Lower leg skin (tissue), 4 donors: ENCODE measurements at regions of chr2 and their contacts with region 1.

Region 1: DNA sequence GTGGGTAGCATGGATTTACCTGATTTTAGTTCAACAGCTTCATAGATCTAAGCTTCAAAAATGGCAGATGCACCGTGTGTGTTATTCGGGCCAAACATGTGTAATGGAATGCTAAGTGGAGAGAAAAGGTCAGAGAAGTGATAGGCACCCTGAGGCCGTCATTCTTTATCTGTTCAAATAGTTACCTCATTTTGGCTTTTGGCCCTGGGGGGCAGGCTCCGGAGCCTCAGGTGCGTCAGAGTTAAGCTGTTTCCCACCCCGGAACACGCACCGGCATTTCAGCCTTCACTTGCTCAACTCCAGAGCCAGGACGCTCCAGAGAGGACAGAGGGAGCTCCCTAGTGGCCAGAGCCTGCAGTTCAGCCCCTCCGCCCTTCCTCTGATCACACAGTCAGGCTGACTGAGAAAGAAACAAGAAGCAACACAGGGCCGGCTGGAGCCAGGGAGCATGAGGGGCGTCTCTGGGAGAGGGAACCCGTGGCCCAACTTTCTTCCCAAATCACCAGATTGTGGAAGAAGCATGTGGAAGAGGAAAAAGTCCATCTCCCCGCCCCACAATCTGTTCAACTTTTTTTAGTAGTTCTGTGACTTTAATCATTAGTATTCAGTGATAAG is 135.2 kb upstream of the EPC2 start:
- DNase-seq: peak; percentile 82 to 95
- H3K4me3 ChIP-seq: no peak overlapping the region
- CTCF ChIP-seq: peak in 1 of 3 donors; percentile 47
- POLR2A ChIP-seq: no peak

Region 2: DNA sequence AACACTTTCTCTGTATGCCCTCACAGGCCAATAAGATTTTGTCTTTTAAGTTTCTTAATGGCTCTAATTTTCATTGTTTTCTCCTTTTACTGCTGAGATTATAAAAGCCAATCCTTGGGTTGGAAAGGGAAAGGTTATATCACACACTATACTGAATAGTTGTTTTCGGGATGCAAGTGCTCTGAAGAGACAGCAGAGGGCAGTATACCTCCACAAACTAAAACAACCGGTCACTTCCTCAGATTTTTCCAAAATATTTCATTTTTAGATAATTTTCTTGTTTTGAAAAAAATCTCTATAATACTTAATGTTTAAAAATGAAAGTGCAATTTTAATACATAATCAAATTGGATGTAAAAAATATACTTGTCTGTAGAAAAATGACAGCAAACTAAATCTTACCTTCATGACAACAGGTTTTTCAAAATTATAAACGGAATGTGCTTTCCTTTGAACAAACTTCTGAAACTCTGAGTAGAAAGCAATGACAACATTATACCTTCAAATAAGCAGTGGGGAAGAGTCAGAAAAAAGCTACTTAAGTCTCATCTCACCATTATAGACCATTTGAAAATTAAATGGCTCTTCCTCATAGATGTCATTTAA is 571.5 kb before region 1 on chr2:
- intact Hi-C with region 1: loop called (anchors 5 kb)
- DNase-seq: no peak
- H3K4me3 ChIP-seq: no peak overlapping the region
- CTCF ChIP-seq: peak in 1 of 3 donors; percentile 51
- POLR2A ChIP-seq: no peak

Region 3: DNA sequence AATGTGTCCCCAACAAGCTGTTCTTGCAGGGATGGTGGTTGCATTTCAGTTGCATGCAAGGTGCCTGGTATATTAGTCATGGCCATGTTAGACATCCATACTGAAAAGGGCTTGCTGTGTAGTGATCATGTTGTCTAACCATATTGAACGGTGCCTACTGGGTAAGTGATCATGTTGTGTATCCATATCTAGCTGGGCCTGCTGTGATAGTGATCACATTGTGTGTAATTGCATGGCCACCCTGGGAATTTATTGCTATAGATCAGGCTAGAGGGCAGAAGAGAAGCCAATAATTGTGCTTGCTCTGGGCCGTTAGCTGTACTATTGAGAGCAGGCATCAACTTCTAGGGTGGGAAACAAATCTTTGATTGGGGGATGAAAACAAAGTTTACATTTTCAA is 125.4 kb after region 1 on chr2:
- intact Hi-C with region 1: no loop called
- DNase-seq: no peak
- H3K4me3 ChIP-seq: no peak overlapping the region
- CTCF ChIP-seq: no peak
- POLR2A ChIP-seq: no peak